Breast epithelium (tissue), 4 donors: ENCODE measurements at regions of chr10 and their contacts with region 1.

Region 1: GRCh38 chr10:51846856-51847506 is 147.6 kb upstream of the CSTF2T start:
- DNase-seq: no peak
- H3K4me3 ChIP-seq: no peak overlapping the region
- H3K27ac ChIP-seq: no peak overlapping the region
- H3K4me1 ChIP-seq: no peaks in the 10 kb centered on the region
- H3K27me3 ChIP-seq: no peaks in the 10 kb centered on the region
- CTCF ChIP-seq: no peak
- POLR2A ChIP-seq: no peak

Region 2: GRCh38 chr10:50452603-50453002 is 1394.4 kb before region 1 on chr10:
- intact Hi-C with region 1: no loop called
- DNase-seq: no peak
- H3K4me3 ChIP-seq: no peak overlapping the region
- H3K27ac ChIP-seq: no peak overlapping the region
- H3K4me1 ChIP-seq: no peaks in the 10 kb centered on the region
- H3K27me3 ChIP-seq: no peaks in the 10 kb centered on the region
- CTCF ChIP-seq: no peak
- POLR2A ChIP-seq: no peak

Region 3: GRCh38 chr10:53140500-53140899 is 1293.5 kb after region 1 on chr10:
- intact Hi-C with region 1: loop called (anchors 10 kb)
- DNase-seq: no peak
- H3K4me3 ChIP-seq: no peak overlapping the region
- H3K27ac ChIP-seq: no peak overlapping the region
- H3K4me1 ChIP-seq: no peaks in the 10 kb centered on the region
- H3K27me3 ChIP-seq: no peaks in the 10 kb centered on the region
- CTCF ChIP-seq: no peak
- POLR2A ChIP-seq: no peak